SK-N-SH (cell line): ENCODE measurements at regions of chr10 and their contacts with region 1.

Region 1: GRCh38 chr10:71893920-71894319 is 42.9 kb upstream of the PSAP start:
- DNase-seq: no peak
- H3K4me3 ChIP-seq: no peak overlapping the region
- H3K27ac ChIP-seq: no peak overlapping the region
- H3K4me1 ChIP-seq: peaks cover 0 to 3% of the 10 kb centered on the region in 2 experiments; a peak in 1 of 4 replicates
- H3K27me3 ChIP-seq: no peaks in the 10 kb centered on the region
- CTCF ChIP-seq: no peak
- EP300 ChIP-seq: no peak
- RAD21 ChIP-seq: no peak

Region 2: DNA sequence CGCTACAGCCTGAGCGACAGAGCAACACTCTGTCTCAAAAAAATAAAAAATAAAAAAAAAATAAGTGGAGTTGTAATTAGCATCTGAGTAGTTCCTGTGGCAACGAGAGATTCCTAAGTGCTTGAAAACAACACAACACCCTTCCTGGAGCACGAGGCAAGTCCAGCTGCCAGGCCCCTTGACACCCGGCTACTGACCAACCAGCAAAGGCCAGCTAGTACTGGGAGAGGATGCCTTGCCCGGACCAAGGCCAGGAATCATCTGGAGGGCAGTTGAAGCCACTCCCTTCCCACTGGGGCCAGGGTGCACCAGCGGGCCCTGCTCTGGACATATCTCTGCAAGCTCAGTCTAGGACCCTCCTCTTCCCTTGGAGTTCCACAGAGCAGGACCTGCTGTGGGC is 174.9 kb before region 1 on chr10:
- CTCF ChIA-PET with region 1: interaction called, 24 read pairs
- POLR2A ChIA-PET with region 1: no interaction called
- DNase-seq: no peak
- H3K4me3 ChIP-seq: no peak overlapping the region
- H3K27ac ChIP-seq: no peak overlapping the region
- H3K4me1 ChIP-seq: peaks cover 0 to 31% of the 10 kb centered on the region in 2 experiments; a peak in 1 of 4 replicates
- H3K27me3 ChIP-seq: 0 out of 2 replicates have a peak, but pooled peaks cover 4% of the 10 kb centered on the region
- CTCF ChIP-seq: no peak
- EP300 ChIP-seq: no peak
- RAD21 ChIP-seq: no peak

Region 3: DNA sequence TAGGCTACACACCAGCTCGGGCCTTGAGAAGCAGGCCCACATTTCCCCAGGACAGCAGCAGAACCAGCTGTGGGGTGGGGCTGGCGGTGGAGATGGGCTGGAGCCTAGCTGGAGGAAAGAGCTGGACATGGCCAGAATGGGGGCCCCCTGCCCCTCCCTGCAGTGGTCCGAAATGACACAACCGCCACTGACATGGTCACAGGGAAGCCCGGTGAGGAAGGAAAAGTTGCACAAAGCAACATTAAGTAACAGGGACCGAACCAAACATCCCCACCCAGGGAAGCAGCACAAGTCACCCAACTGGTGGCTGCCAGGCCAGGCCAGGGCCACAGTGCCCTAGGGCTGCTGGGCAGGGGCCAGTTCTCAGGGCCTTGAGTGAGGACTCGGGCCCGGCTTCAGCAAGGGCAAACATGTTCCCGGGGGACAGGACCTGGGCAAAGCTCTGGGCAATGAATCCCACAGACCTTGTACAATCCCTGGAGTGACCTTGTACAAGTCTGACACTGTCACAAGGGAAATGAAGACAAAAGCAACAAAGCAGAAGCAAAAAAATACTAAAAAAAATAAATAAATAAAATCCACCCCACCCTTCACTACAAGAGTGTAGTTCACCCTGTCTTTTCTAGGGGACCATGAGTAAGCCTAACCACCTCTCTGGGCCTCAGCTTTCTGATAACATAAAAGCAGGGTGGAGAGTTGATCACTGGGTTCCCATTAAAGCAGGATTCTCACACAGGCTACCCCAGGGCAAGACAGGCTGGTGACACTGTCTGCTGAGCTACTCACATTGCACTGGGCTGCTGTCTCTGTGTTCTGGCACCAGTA is 75.9 kb before region 1 on chr10:
- CTCF ChIA-PET with region 1: interaction called, 40 read pairs
- POLR2A ChIA-PET with region 1: no interaction called
- DNase-seq: no peak
- H3K4me3 ChIP-seq: no peak overlapping the region
- H3K27ac ChIP-seq: no peak overlapping the region
- H3K4me1 ChIP-seq: no peaks in the 10 kb centered on the region; a peak in 1 of 4 replicates
- H3K27me3 ChIP-seq: no peaks in the 10 kb centered on the region
- CTCF ChIP-seq: no peak
- EP300 ChIP-seq: no peak
- RAD21 ChIP-seq: no peak

Region 4: GRCh38 chr10:71860243-71861029 is 33.5 kb before region 1 on chr10:
- CTCF ChIA-PET with region 1: interaction called, 26 read pairs
- POLR2A ChIA-PET with region 1: no interaction called
- DNase-seq: peak; percentile 70
- H3K4me3 ChIP-seq: no peak overlapping the region; a peak in 1 of 4 replicates
- H3K27ac ChIP-seq: peak overlapping the region; percentile 90 to 99
- H3K4me1 ChIP-seq: peaks cover 15 to 29% of the 10 kb centered on the region in 2 experiments; a peak in 3 of 4 replicates
- H3K27me3 ChIP-seq: no peaks in the 10 kb centered on the region
- CTCF ChIP-seq: no peak
- EP300 ChIP-seq: peak; percentile 45 to 88
- RAD21 ChIP-seq: no peak

Region 5: DNA sequence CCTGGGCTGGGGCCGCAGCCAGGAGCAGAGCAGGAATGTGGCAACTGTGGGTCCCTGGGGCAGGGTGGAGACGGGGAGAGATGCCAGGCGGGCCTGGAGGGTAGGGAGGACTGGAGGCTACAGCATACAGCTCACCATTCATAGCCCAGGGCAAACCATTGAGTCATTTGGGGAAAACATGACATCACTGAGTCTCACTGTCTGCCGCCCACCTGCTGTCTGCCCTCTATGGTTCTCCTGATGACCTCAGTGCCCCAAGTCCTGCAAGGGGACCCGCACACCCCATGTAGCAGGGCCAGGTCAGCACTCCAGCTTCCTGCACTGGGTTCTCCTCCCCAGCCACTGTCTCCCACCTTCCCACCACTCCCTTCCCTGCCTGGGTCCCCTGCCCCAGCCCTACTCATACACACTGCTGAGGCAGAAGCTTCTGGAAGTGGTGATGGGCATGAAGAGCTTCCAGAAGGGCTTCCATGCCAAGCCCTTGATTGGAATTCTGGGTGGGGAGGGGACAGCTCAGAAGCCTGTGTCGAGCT is 80.6 kb after region 1 on chr10:
- CTCF ChIA-PET with region 1: interaction called, 17 read pairs
- POLR2A ChIA-PET with region 1: no interaction called
- DNase-seq: no peak
- H3K4me3 ChIP-seq: no peak overlapping the region
- H3K27ac ChIP-seq: peak overlapping the region in 1 of 2 experiments; percentile 76; a peak in 2 of 4 replicates
- H3K4me1 ChIP-seq: peaks cover 38 to 40% of the 10 kb centered on the region in 2 experiments; a peak in 3 of 4 replicates
- H3K27me3 ChIP-seq: no peaks in the 10 kb centered on the region
- CTCF ChIP-seq: no peak
- EP300 ChIP-seq: no peak
- RAD21 ChIP-seq: no peak

Region 6: GRCh38 chr10:72053690-72054089 is 159.8 kb after region 1 on chr10:
- CTCF ChIA-PET with region 1: interaction called, 250 read pairs
- POLR2A ChIA-PET with region 1: no interaction called
- DNase-seq: no peak
- H3K4me3 ChIP-seq: no peak overlapping the region
- H3K27ac ChIP-seq: no peak overlapping the region
- H3K4me1 ChIP-seq: peaks cover 0 to 3% of the 10 kb centered on the region in 2 experiments; a peak in 1 of 4 replicates
- H3K27me3 ChIP-seq: no peaks in the 10 kb centered on the region
- CTCF ChIP-seq: no peak
- EP300 ChIP-seq: no peak
- RAD21 ChIP-seq: no peak